OCI-LY7 (cell line): ENCODE measurements at regions of chr9 and their contacts with region 1.

Region 1: DNA sequence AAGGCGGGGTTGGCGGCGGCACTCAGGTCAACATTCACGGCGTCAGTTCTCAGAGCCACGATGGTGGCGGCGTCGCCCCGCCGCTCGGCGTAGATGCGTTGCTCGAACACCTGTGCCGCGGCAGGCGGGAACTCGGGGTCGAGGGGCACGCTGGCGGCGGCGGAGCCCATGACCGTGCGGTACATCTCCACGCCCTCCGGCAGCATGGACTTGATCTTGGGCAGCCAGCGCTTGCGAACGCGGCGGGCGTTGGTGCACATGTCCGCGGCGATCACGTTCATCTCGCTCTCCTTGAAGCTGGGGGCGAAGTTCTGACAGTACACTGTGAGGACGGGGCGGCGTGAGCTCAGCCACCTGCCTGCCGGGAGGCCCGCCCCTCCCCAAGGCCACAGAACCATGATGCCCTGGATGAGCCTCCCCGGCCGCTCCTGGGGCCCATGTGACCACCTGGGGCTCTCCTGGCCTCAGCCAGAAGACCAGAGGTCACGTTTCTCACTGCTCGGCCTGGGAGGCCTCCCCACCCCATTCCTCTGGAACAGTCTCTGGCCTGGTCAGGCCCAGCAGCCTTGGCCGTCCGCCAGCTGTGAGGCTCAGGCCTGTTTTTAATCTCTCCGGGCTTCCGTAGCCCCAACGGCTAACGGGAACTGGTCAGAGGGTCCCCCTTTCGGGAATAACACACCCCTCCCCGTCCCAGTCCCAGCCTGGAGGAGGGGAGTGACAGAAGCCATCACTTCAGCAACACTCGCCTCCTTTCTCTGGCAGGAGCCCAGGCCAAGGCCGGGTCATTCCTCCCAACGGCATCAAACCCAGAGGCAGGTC is 50.7 kb upstream of the UBAC1 start:
- DNase-seq: peak; percentile 24
- H3K4me3 ChIP-seq: peak overlapping the region; percentile 69
- H3K27ac ChIP-seq: peak overlapping the region; percentile 100
- H3K4me1 ChIP-seq: peaks cover 66% of the 10 kb centered on the region
- CTCF ChIP-seq: no peak

Region 2: DNA sequence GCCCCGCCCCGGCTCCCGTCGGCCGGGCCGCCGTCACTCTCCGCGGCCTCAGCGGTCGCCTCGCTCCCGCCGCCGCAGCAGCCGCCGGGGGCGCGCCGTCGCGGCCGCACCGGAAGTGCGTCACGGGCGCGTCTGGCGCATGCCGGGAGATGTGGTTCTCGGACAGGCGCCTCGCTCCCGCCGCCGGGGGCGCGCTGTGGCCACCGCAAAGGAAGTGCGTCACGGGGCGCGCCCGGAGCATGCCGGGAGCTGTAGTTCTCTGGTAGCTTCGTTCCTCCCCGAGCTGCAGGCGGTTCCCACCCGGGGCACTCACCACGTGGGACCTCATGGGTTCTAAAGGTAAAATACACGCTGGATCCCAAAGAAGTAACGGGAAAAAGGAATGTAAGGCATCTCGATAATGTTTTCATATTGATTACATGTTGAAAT is 50.6 kb before region 1 on chr9 and contains the start of gene UBAC1:
- CTCF ChIA-PET with region 1: no interaction called
- POLR2A ChIA-PET with region 1: no interaction called
- intact Hi-C with region 1: loop called (anchors 1 kb)
- DNase-seq: peak; percentile 97
- H3K4me3 ChIP-seq: peak within 1 kb of the TSS; percentile 98
- H3K27ac ChIP-seq: peak within 1 kb of the TSS; percentile 9
- H3K4me1 ChIP-seq: peaks cover 34% of the 10 kb centered on the region
- CTCF ChIP-seq: 0 out of 2 replicates have a peak, but pooled peaks have one; percentile 9
- total RNA-seq, gene UBAC1: 59.2 and 75.7 TPM in 2 replicates

Region 3: GRCh38 chr9:135992486-135993408 is 19.2 kb before region 1 on chr9:
- CTCF ChIA-PET with region 1: no interaction called
- POLR2A ChIA-PET with region 1: interaction called, 3 read pairs
- intact Hi-C with region 1: loop called (anchors 1 kb)
- DNase-seq: peak; percentile 88
- H3K4me3 ChIP-seq: peak overlapping the region; percentile 54
- H3K27ac ChIP-seq: peak overlapping the region; percentile 78
- H3K4me1 ChIP-seq: peaks cover 52% of the 10 kb centered on the region
- CTCF ChIP-seq: 0 out of 2 replicates have a peak, but pooled peaks have one; percentile 23

Region 4: GRCh38 chr9:136244122-136244968 is 232.4 kb after region 1 on chr9:
- CTCF ChIA-PET with region 1: no interaction called
- POLR2A ChIA-PET with region 1: no interaction called
- intact Hi-C with region 1: loop called (anchors 5 kb)
- DNase-seq: peak; percentile 84
- H3K4me3 ChIP-seq: peak overlapping the region; percentile 98
- H3K27ac ChIP-seq: peak overlapping the region; percentile 86
- H3K4me1 ChIP-seq: peaks cover 59% of the 10 kb centered on the region
- CTCF ChIP-seq: no peak